ENCODE measurements at regions of chr21 and their contacts with region 1.

Region 1: DNA sequence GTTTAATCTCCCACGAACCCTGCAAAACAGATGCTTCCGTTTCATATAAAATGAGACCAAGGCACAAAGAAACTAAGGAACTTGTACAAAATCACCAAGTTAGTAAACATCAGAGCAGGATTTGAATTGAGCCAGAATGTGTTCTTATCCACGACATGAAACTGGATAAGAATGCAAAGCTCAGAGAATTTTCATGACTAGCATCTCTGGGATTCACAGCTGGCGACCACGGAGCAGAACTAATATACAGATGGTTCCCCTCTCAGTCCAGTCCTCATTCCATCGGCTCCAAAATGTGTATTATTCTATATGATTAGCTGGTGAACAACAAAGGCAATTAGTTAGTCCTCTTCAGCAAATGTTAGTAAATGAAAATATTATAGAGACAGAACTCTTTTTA is 72.3 kb upstream of the ERG start:
- DNase-seq: no peak
- H3K4me3 ChIP-seq: no peak overlapping the region
- H3K27ac ChIP-seq: no peak overlapping the region
- H3K4me1 ChIP-seq: no peaks in the 10 kb centered on the region
- H3K27me3 ChIP-seq: peaks cover 6% of the 10 kb centered on the region
- CTCF ChIP-seq: no peak
- EP300 ChIP-seq: no peak
- POLR2A ChIP-seq: no peak

Region 2: DNA sequence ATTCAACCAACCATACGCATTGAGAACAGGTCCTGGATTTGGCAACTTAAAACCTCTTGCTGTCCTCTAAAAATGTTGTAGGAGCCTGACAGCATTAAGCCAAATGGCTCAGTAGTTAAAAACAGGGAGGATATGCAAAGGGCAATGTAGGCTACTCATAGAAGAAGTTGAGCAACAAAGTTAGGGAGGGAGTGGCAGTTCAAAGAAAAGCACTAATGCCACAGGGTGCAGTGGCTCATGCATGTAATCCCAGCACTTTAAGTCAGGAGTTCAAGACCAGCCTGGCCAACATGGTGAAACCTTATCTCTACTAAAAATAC is 20.6 kb after region 1 on chr21:
- in situ Hi-C with region 1: no loop called
- intact Hi-C with region 1: loop called (anchors 1 kb)
- DNase-seq: no peak
- H3K4me3 ChIP-seq: no peak overlapping the region
- H3K27ac ChIP-seq: no peak overlapping the region
- H3K4me1 ChIP-seq: no peaks in the 10 kb centered on the region
- H3K27me3 ChIP-seq: no peaks in the 10 kb centered on the region
- CTCF ChIP-seq: no peak
- EP300 ChIP-seq: no peak
- POLR2A ChIP-seq: no peak

Region 3: GRCh38 chr21:38798481-38798882 is 227.9 kb after region 1 on chr21:
- in situ Hi-C with region 1: no loop called
- intact Hi-C with region 1: no loop called
- DNase-seq: peak; percentile 84
- H3K4me3 ChIP-seq: no peak overlapping the region
- H3K27ac ChIP-seq: peak overlapping the region in 2 of 4 donors; percentile 56 to 75
- H3K4me1 ChIP-seq: peaks cover 0 to 56% (median 22%) of the 10 kb centered on the region in 4 donors
- H3K27me3 ChIP-seq: no peaks in the 10 kb centered on the region
- CTCF ChIP-seq: no peak
- EP300 ChIP-seq: no peak
- POLR2A ChIP-seq: peak; percentile 31

Measured in transverse colon (tissue), 4 donors.